ENCODE measurements at regions of chr10 and their contacts with region 1.

Region 1: DNA sequence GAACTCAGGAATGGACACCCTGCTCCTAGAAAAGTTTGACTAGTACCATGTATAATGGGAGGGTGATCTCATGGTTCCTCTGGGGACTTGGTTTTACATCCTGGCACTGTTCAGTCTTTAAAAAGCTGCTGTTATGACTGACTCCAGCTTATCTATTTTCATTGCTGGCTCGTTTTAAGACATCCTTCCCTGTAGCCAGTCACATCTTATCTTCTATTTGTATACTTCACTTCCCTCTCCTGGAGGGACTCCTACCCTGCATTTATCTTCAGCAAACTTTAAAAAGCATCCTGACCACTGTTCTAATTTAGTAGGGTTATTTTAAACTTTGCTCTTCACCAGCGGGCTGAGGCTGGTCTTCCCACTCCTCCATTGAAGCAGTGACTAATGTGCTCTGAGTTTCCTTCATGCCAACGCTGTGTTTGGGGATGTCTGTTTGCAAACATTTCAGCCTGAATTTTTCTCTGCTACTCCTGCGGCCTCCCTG is 72.9 kb upstream of the ARMC3 start:
- DNase-seq: no peak

Region 2: DNA sequence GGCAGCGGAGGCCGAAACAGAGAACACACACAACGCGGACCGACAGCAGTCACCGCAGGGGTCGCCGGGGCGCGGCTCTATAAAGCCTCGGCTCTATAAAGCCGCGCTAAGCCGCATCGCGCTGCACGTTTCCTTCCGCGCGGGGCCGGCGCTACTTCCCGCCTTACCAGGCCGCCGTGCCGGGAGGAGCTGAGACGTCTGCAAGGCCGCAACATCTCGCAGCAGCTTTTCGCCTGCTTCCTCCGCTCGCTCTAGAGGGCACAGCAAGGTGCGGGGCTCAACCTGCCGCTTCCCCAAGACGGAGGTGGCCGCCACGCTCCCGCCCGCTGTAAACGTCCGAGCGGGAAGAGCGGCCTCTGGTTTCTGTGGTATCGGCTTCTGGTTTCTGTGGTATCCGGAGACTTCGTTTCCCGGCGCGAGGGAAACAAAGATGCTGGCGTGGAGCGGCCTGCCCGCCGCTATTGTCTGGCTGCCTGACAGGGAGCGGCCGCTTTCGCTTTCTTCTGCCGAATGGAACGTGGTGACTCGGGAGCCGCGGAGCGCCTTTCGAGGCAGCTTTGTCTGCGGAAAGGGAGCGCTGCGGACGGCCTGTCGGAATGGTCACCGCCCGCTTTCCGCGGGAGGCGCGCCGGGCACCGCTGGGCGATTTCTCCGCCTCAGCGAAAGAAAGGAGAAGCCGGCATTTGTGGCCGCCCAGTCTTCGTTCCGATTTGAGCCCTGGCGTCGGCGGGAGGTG is 417.9 kb before region 1 on chr10:
- intact Hi-C with region 1: no loop called
- DNase-seq: peak; percentile 66 to 98 (median 86)

Region 3: GRCh38 chr10:22894714-22895113 is 39.7 kb after region 1 on chr10:
- intact Hi-C with region 1: no loop called
- DNase-seq: no peak

Region 4: GRCh38 chr10:22978287-22978686 is 123.3 kb after region 1 on chr10:
- intact Hi-C with region 1: loop called (anchors 10 kb)
- DNase-seq: no peak

Region 5: GRCh38 chr10:23095966-23096635 is 241.1 kb after region 1 on chr10:
- intact Hi-C with region 1: no loop called
- DNase-seq: peak in 4 of 10 donors; percentile 17 to 26 (median 20)